A549 (cell line): ENCODE measurements at regions of chr4 and their contacts with region 1.

Region 1: DNA sequence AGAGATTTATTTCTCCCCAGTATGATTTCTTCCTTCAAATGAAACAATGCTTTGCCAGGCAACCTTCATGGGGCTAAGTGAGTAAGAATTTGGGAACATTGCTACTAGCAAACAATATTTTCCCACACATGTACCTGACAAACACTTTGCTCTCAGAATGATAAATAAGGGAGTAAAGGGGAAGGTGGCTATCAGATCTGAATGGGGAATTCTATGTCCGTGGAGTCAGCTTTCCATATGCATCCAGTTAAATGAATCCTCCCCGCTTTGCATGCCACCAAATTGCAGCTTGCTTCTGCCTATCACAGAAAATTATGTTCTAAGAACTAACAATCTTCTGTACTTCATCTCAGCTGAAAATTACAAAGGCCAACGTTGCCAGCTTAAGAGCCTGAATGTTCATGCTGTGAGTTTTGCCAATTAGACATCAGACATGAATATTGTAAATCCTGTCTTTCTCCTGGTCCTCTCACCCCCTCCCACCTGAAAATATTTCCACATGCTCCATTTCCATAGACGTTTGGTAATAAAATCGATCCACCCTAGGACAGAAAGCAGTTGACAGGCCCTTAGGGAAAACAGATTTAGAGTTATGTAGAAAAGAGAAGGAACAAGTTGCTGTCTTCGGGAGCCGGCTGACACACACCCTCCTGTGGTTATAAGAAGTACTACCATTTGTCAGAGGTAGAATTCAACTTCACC is 6.3 kb downstream of the MEPE start:
- DNase-seq: peak in 1 of 2 experiments; percentile 34
- ATAC-seq: peak in 1 of 2 experiments; percentile 73; a peak in 4 of 6 replicates
- H3K4me3 ChIP-seq: no peak overlapping the region
- H3K27ac ChIP-seq: no peak overlapping the region
- H3K4me1 ChIP-seq: peaks cover 1% of the 10 kb centered on the region; the same call in 1 of the 3 replicates
- CTCF ChIP-seq: peak; percentile 61
- EP300 ChIP-seq: no peak
- POLR2A ChIP-seq: no peak
- RAD21 ChIP-seq: peak; percentile 67 to 71

Region 2: DNA sequence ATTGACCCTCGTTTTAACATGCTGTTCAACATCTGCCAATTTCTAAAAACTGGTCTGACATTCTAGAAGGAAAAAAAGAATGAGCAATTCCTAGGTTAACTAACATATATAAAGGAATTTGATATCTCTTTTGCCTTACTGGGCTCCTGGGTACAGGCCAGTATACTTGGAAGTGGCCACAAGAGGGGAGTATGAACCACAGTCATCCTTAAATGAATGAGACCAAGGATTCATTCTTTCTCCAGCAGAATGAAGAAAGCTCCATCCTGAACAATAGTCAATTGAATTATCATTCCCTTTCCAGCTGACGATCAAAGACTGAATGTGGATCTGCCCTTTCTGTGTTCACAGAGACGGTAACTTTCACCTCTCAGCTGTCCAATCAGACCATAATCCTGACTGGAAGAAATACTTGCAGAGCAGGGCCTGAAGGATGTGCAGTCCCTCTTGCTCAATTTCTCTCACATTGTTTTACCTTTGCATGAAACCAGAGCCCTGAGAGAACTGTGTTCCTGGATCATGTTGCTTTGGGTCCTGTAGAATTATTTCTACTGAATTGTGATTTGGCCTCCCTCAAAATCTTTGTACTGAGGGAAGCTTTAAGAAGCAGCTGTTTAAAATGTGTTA is 295.1 kb before region 1 on chr4:
- CTCF ChIA-PET with region 1: interaction called, 33 read pairs
- POLR2A ChIA-PET with region 1: no interaction called
- DNase-seq: peak; percentile 25 to 48
- ATAC-seq: peak; percentile 91 to 92; a peak in 5 of 6 replicates
- H3K4me3 ChIP-seq: no peak overlapping the region
- H3K27ac ChIP-seq: no peak overlapping the region
- H3K4me1 ChIP-seq: no peaks in the 10 kb centered on the region
- CTCF ChIP-seq: peak; percentile 60
- EP300 ChIP-seq: no peak
- POLR2A ChIP-seq: no peak
- RAD21 ChIP-seq: peak; percentile 65 to 66

Region 3: GRCh38 chr4:87679449-87680169 is 159.4 kb before region 1 on chr4:
- CTCF ChIA-PET with region 1: interaction called, 24 read pairs
- POLR2A ChIA-PET with region 1: no interaction called
- DNase-seq: peak; percentile 8 to 46
- ATAC-seq: peak in 1 of 2 experiments; percentile 62; a peak in 3 of 6 replicates
- H3K4me3 ChIP-seq: no peak overlapping the region
- H3K27ac ChIP-seq: no peak overlapping the region
- H3K4me1 ChIP-seq: no peaks in the 10 kb centered on the region
- CTCF ChIP-seq: peak; percentile 71
- EP300 ChIP-seq: no peak
- POLR2A ChIP-seq: no peak
- RAD21 ChIP-seq: peak; percentile 77 to 79

Region 4: GRCh38 chr4:87824352-87824751 is 14.7 kb before region 1 on chr4:
- CTCF ChIA-PET with region 1: interaction called, 15 read pairs
- POLR2A ChIA-PET with region 1: no interaction called
- DNase-seq: no peak
- ATAC-seq: no peak
- H3K4me3 ChIP-seq: no peak overlapping the region
- H3K27ac ChIP-seq: no peak overlapping the region
- H3K4me1 ChIP-seq: peaks cover 6% of the 10 kb centered on the region
- CTCF ChIP-seq: no peak
- EP300 ChIP-seq: no peak
- POLR2A ChIP-seq: no peak
- RAD21 ChIP-seq: no peak

Region 5: GRCh38 chr4:87882321-87882720 is 43.3 kb after region 1 on chr4:
- CTCF ChIA-PET with region 1: no interaction called
- POLR2A ChIA-PET with region 1: no interaction called
- DNase-seq: no peak
- ATAC-seq: no peak
- H3K4me3 ChIP-seq: no peak overlapping the region
- H3K27ac ChIP-seq: no peak overlapping the region
- H3K4me1 ChIP-seq: no peaks in the 10 kb centered on the region
- CTCF ChIP-seq: no peak
- EP300 ChIP-seq: no peak
- POLR2A ChIP-seq: no peak
- RAD21 ChIP-seq: no peak

Region 6: GRCh38 chr4:88162626-88163025 is 323.6 kb after region 1 on chr4:
- CTCF ChIA-PET with region 1: no interaction called
- POLR2A ChIA-PET with region 1: no interaction called
- DNase-seq: no peak
- ATAC-seq: no peak
- H3K4me3 ChIP-seq: no peak overlapping the region
- H3K27ac ChIP-seq: peak overlapping the region in 1 of 2 experiments; percentile 51; a peak in 3 of 6 replicates
- H3K4me1 ChIP-seq: peaks cover 22% of the 10 kb centered on the region
- CTCF ChIP-seq: no peak
- EP300 ChIP-seq: no peak
- POLR2A ChIP-seq: no peak
- RAD21 ChIP-seq: no peak